AG04449 (cell line): ENCODE measurements at regions of chr13 and their contacts with region 1.

Region 1: GRCh38 chr13:95191821-95192563 is 109.3 kb downstream of the ABCC4 start:
- DNase-seq: peak; percentile 36
- H3K4me3 ChIP-seq: no peak overlapping the region
- CTCF ChIP-seq: peak; percentile 99

Region 2: DNA sequence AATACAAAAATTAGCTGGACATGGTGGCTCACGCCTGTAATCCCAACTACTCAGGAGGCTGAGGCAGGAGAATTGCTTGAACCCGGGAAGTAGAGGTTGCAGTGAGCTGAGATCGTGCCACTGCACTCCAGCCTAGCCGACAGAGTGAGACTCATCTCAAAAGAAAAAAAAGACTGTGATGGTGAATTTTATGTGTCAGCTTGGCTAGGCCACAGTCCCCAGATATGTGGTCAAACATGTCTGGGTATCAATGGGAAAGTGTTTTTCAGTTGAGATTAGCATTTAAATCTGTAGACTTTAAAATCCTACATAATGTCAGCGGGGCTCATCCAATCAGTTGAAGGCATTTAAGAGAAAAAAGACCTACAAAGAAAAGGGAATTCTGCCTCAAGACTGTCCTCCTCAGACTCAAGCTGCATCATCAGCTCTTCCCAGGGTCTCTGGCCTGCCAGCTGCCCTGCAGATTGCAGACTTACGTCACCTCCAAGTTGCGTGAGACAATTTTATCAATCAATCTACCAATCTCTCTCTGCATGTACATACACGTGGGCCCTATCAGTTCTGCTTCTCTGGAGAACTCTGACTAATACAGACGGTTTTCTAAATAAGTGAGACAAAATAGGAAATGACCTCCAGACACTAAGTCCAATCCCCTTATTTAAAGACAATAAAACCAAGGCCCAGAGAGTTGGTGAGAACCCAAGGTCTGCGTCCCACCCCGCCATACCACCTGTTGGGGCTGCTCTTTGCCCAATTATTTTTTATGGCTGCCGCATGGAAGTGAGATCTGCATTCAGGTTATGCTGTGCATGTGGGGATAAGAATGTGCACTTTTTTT is 10.0 kb after region 1 on chr13:
- CTCF ChIA-PET with region 1: interaction called, 74 read pairs
- POLR2A ChIA-PET with region 1: no interaction called
- DNase-seq: no peak
- H3K4me3 ChIP-seq: no peak overlapping the region
- CTCF ChIP-seq: no peak

Region 3: GRCh38 chr13:95226932-95227695 is 35.1 kb after region 1 on chr13:
- CTCF ChIA-PET with region 1: interaction called, 10 read pairs
- POLR2A ChIA-PET with region 1: no interaction called
- DNase-seq: no peak
- H3K4me3 ChIP-seq: no peak overlapping the region
- CTCF ChIP-seq: no peak

Region 4: GRCh38 chr13:95301183-95301967 is 109.4 kb after region 1 on chr13 and contains the start of gene ABCC4:
- CTCF ChIA-PET with region 1: interaction called, 133 read pairs
- POLR2A ChIA-PET with region 1: interaction called, 3 read pairs
- DNase-seq: no peak
- H3K4me3 ChIP-seq: peak within 1 kb of the TSS; percentile 81
- CTCF ChIP-seq: peak; percentile 6

Region 5: DNA sequence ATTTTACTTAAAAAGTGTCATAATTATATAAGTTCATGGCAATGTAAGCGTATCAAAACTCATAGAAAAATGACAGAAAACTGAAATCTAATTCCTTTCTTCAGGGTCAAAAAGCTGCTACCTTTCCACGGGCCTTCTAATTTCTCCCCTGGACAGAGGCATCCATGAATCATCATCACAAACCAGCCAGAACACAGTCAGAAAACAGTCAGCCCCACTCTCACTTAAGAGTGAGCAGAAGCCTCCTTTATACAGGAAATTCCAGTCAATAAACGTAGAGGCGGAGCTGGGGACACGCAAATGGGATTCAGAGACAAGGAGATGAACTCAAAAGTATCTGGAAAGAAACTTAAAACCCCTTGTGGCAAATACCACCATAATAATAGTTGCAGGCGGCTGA is 163.5 kb after region 1 on chr13:
- CTCF ChIA-PET with region 1: interaction called, 10 read pairs
- POLR2A ChIA-PET with region 1: no interaction called
- DNase-seq: peak; percentile 24
- H3K4me3 ChIP-seq: no peak overlapping the region
- CTCF ChIP-seq: no peak

Region 6: DNA sequence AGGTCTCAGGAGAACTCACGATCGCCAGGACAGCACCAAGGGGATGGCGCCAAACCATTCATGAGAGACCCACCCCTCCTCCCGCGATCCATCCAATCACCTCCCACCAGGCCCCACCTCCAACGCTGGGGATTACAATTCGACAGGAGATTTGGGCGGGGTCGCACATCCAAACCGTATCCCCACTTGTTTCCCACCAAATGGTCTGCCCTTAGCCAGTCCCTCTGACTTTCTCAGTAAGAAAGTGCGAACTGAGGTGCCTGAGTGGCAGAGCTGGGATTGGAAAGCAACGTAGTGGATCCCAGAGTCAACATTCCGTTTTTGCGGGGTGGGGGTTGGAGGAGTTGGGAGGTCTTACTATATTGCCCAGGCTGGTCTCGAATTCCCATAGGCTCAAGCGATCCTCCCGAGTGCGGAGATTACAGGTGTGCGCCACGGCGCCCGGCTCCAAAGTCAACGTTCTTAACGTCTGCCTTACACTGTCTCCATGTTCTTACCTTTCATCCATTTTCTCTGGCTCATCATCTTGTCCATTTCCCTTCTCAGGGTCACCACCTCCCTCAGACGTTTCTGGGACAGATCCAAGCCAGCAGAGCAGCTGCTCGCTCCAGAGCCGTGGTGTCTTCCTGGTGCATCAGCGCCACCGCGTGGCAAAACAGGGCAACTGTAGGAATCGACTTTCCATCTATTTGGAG is 212.0 kb after region 1 on chr13:
- CTCF ChIA-PET with region 1: interaction called, 1,369 read pairs
- POLR2A ChIA-PET with region 1: interaction called, 3 read pairs
- DNase-seq: peak; percentile 4
- H3K4me3 ChIP-seq: peak overlapping the region; percentile 58
- CTCF ChIP-seq: peak; percentile 89

Region 7: DNA sequence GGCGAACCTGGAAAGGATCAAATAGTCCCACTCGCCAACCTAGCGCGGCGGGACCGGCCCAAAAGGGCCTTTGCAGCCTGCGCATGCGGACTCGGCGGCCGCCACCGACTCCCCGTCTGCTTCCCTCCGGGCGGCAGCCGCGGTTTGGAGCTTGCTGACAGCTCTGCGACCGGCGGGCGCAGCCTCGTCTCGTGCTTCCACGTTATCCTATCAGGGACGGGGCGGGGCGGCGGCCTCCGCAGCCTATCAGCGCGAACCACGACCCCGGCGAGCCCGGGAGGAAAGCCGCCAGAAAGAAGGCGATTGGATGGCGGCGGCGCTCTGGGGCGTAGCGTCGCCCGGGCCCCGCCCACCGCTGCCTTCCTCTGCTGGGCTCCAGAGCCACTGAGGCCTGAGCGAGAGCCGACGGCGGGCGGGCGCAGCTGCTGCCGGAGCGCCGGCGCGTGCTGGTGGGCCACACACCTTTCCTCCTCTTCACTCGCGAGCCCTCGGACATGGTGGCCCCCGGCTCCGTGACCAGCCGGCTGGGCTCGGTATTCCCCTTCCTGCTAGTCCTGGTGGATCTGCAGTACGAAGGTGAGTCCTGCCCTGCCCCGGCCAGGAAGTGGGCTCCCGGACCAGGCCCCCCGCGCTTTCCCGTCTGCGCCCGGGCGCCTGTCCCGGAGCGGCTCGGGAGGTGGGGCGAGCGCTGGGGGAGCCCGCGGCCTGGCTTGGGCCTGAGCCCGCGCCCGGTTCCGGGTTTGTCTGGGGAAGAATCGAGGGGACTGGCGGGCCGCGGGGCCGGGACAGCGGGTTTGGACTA is 485.0 kb after region 1 on chr13 and contains the start of gene DNAJC3:
- CTCF ChIA-PET with region 1: no interaction called
- POLR2A ChIA-PET with region 1: no interaction called
- DNase-seq: peak; percentile 78
- H3K4me3 ChIP-seq: peak within 1 kb of the TSS; percentile 90
- CTCF ChIP-seq: no peak